K562 (cell line): ENCODE measurements at regions of chr12 and their contacts with region 1.

Region 1: DNA sequence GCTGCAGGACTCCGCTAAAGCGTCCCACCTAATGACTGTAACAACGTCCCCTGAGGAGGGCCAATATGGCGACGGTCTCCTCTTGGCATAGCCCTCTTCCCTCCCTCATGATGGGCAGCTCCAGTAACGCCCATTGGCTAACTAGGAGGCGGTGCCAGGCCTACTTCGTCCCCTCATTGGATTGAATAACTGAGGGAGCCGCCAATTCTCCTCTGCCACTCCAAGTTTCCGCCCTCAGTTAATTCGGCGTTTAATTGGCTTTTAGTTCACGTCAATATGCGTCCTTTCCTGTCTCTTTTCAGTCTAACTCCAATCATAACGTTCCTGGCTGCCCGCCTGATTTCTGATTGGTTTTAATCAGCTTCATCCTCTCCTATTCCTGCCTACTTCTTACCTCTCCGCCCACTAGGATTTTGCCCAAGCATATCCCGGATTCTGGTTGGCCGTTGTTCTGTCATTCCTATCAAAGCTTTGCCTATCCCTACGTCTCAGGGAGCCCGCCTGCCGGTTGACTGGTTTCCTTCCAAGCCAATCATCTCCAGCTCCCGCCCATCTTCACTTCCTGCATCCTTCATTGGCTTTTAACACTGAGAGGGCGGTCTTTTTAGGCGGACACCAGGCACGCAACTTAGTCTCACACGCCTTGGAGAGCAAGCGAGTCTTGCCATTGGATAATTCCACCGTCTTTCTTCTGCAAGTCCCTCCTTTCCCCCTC is 430 bp upstream of the SP1 start:
- DNase-seq: peak; percentile 85 to 100 (median 92)
- ATAC-seq: peak; percentile 86
- H3K4me3 ChIP-seq: peak overlapping the region; percentile 62
- H3K27ac ChIP-seq: peak overlapping the region; percentile 94
- H3K4me1 ChIP-seq: peaks cover 30 to 38% of the 10 kb centered on the region in 2 experiments
- H3K27me3 ChIP-seq: no peaks in the 10 kb centered on the region
- CTCF ChIP-seq: peak in 1 of 3 experiments; percentile 7; a peak in 1 of 6 replicates
- EP300 ChIP-seq: peak; percentile 18; the same call in 1 of the 2 replicates
- POLR2A ChIP-seq: peak; percentile 95
- RAD21 ChIP-seq: no peak

Region 2: GRCh38 chr12:53352331-53353256 is 27.0 kb before region 1 on chr12:
- CTCF ChIA-PET with region 1: interaction called, 20 read pairs
- POLR2A ChIA-PET with region 1: interaction called, 3 read pairs
- in situ Hi-C with region 1: no loop called
- intact Hi-C with region 1: loop called (anchors 1 kb)
- DNase-seq: peak; percentile 71 to 93 (median 74)
- ATAC-seq: peak; percentile 95
- H3K4me3 ChIP-seq: no peak overlapping the region
- H3K27ac ChIP-seq: no peak overlapping the region
- H3K4me1 ChIP-seq: peaks cover 12 to 17% of the 10 kb centered on the region in 2 experiments
- H3K27me3 ChIP-seq: no peaks in the 10 kb centered on the region
- CTCF ChIP-seq: peak; percentile 91 to 96 (median 92)
- EP300 ChIP-seq: no peak
- POLR2A ChIP-seq: no peak
- RAD21 ChIP-seq: peak; percentile 98 to 99

Region 3: DNA sequence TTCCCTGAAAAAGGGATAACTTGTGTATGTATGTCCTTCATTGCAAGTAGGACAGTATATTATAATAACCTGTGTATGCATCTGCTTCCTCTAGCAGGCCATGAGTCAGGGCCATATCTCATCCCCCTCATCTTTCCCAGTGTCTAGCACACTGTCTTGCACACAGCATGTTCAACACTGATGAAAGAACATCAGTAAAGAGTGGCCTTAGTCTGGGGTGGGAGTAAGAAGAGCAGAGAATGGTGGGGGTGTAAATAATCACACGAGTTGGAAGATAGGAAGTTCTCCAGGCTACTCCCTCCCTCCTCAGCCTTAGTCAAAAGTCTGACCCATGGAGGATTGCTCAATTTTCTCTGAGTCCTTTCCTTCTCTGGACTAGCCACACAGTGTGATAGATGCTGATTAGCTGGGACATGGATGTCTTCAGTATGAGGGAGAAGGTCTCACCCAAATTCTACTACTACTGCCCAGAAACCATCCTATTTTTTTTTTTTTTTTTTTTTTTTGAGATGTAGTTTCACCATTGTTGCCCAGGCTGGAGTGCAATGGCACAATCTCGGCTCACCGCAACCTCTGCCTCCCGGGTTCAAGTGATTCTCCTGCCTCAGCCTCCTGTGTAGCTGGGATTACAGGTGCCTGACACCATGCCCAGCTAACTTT is 14.2 kb before region 1 on chr12:
- CTCF ChIA-PET with region 1: no interaction called
- POLR2A ChIA-PET with region 1: interaction called, 15 read pairs
- in situ Hi-C with region 1: no loop called
- intact Hi-C with region 1: loop called (anchors 1 kb)
- DNase-seq: peak; percentile 45 to 82 (median 64)
- ATAC-seq: peak; percentile 78
- H3K4me3 ChIP-seq: no peak overlapping the region
- H3K27ac ChIP-seq: peak overlapping the region; percentile 79
- H3K4me1 ChIP-seq: peaks cover 21 to 30% of the 10 kb centered on the region in 2 experiments
- H3K27me3 ChIP-seq: no peaks in the 10 kb centered on the region
- CTCF ChIP-seq: no peak
- EP300 ChIP-seq: peak; percentile 49; the same call in 1 of the 2 replicates
- POLR2A ChIP-seq: no peak
- RAD21 ChIP-seq: no peak

Region 4: GRCh38 chr12:53391729-53392128 is 12.2 kb after region 1 on chr12:
- CTCF ChIA-PET with region 1: no interaction called
- POLR2A ChIA-PET with region 1: interaction called, 13 read pairs
- in situ Hi-C with region 1: no loop called
- intact Hi-C with region 1: no loop called
- DNase-seq: no peak
- ATAC-seq: no peak
- H3K4me3 ChIP-seq: no peak overlapping the region
- H3K27ac ChIP-seq: no peak overlapping the region
- H3K4me1 ChIP-seq: peaks cover 7 to 9% of the 10 kb centered on the region in 2 experiments
- H3K27me3 ChIP-seq: no peaks in the 10 kb centered on the region
- CTCF ChIP-seq: no peak
- EP300 ChIP-seq: no peak
- POLR2A ChIP-seq: no peak
- RAD21 ChIP-seq: no peak

Region 5: DNA sequence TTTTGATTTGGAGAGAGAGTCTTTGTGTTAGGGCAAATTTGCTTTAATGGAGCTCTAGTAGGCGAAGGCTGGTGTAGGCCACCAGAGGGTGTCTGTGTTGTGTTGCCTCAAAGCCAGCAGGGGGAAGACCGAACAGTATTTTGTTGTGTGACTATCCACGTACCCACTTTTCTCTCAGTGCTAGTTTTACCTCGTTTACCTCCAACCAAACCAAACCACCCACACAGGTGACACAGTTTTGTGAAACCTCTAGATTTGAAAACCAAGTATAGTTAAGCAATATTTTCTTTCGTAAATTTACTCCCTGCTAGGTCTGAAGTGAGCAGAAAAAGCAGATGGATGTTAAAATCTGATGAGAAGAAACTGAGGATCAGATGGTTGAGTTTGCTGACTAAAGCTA is 164.0 kb after region 1 on chr12:
- CTCF ChIA-PET with region 1: no interaction called
- POLR2A ChIA-PET with region 1: no interaction called
- in situ Hi-C with region 1: no loop called
- intact Hi-C with region 1: no loop called
- DNase-seq: peak; percentile 42 to 63 (median 58)
- ATAC-seq: peak; percentile 98
- H3K4me3 ChIP-seq: no peak overlapping the region
- H3K27ac ChIP-seq: no peak overlapping the region
- H3K4me1 ChIP-seq: no peaks in the 10 kb centered on the region; a peak in 1 of 5 replicates
- H3K27me3 ChIP-seq: no peaks in the 10 kb centered on the region
- CTCF ChIP-seq: peak; percentile 82 to 99 (median 98)
- EP300 ChIP-seq: no peak
- POLR2A ChIP-seq: no peak
- RAD21 ChIP-seq: peak; percentile 50 to 75